ENCODE measurements at regions of chr7 and their contacts with region 1.

Region 1: DNA sequence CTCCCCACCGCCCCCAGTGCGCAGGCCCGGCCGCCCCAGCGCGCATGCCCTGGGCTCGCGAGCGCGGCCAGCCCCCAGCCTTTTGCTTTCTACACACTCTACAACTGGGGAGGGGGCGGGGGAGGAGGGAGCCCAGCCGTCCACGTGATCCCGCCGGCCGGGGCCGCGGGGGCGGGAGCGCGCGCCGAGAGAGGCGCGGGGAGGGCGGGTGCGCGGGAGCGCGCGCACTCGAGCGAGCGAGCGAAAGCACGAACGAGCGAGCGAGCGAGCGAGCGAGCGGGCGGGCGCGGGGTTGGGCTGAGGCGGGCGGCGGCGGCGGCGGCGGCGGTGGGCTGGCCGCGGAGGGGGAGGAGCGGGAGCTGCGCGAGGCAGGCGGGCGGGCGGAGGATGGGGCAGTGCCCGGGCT is at the start of gene AUTS2:
- DNase-seq: peak; percentile 86 to 91 (median 90)
- ATAC-seq: peak; percentile 85 to 93 (median 90)
- H3K4me3 ChIP-seq: peak within 1 kb of the TSS; percentile 65 to 98 (median 85)
- H3K27ac ChIP-seq: peak within 1 kb of the TSS; percentile 72 to 95 (median 87)
- H3K4me1 ChIP-seq: peaks cover 0 to 34% (median 4%) of the 10 kb centered on the region in 12 donors
- H3K27me3 ChIP-seq: no peaks in the 10 kb centered on the region
- CTCF ChIP-seq: no peak
- POLR2A ChIP-seq: no peak
- total RNA-seq, gene AUTS2: 5.4 to 14.0 (median 8.3) TPM

Region 2: GRCh38 chr7:69412331-69413078 is 185.6 kb before region 1 on chr7:
- intact Hi-C with region 1: loop called in 1 of 10 experiments (anchors 10 kb)
- DNase-seq: peak in 4 of 5 donors; percentile 40 to 74 (median 50)
- ATAC-seq: peak; percentile 85 to 99 (median 96)
- H3K4me3 ChIP-seq: no peak overlapping the region
- H3K27ac ChIP-seq: no peak overlapping the region
- H3K4me1 ChIP-seq: peaks cover 0 to 9% (median 0%) of the 10 kb centered on the region in 12 donors
- H3K27me3 ChIP-seq: no peaks in the 10 kb centered on the region
- CTCF ChIP-seq: no peak
- POLR2A ChIP-seq: no peak

Region 3: DNA sequence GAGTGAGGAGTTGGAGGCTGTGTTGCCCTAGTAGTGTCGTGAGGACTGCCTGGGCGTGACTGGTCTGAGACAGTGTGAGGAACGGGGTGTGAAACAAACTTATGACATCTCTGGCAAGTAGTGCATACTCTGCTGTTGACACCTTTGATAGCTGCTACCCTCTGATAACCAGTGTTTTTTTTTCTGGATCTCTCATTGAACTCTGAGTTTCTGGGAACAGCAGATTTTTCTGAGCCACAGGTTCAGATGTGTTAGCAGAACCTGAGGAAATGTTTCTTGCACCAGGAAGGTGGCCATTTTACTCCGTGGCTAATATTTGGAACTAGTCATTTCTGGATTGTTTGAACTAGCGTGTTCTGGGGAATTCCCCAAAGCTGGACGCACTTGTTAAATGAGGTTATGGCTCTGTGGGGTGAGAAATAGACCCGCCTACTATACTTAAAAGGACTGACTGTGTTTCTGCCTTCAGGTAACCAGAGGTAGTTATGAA is 53.1 kb after region 1 on chr7:
- intact Hi-C with region 1: loop called in 2 of 10 experiments (anchors 5 kb)
- DNase-seq: no peak
- ATAC-seq: peak in 1 of 4 donors; percentile 46
- H3K4me3 ChIP-seq: no peak overlapping the region
- H3K27ac ChIP-seq: no peak overlapping the region
- H3K4me1 ChIP-seq: peaks cover 0 to 24% (median 16%) of the 10 kb centered on the region in 12 donors
- H3K27me3 ChIP-seq: no peaks in the 10 kb centered on the region
- CTCF ChIP-seq: no peak
- POLR2A ChIP-seq: no peak

Region 4: DNA sequence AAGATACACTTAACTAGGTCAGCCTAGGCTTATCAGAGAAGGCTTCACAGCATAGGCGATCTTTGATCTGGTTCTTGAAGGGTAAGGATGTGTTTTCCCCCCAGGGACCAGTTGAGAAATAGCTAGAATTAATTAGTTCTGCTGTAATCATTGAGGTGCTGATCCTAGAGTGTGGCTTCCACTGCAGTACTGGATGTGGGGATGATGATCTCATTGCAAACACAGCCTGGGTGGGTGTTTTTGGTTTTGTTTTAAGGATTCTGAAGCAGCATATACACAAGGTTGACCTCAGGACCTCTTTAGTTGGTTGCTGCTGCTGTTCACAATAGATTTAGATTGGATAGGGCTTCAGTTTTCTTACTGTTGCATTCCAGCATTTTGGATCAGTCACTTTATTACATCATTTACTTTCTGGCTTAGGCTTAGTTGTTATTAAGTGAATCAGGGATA is 159.9 kb after region 1 on chr7:
- intact Hi-C with region 1: loop called in 1 of 10 experiments (anchors 10 kb)
- DNase-seq: no peak
- ATAC-seq: peak in 1 of 4 donors; percentile 28
- H3K4me3 ChIP-seq: no peak overlapping the region
- H3K27ac ChIP-seq: no peak overlapping the region
- H3K4me1 ChIP-seq: peaks cover 0 to 23% (median 0%) of the 10 kb centered on the region in 12 donors
- H3K27me3 ChIP-seq: no peaks in the 10 kb centered on the region
- CTCF ChIP-seq: no peak
- POLR2A ChIP-seq: no peak

Region 5: GRCh38 chr7:69893906-69894305 is 295.8 kb after region 1 on chr7:
- intact Hi-C with region 1: loop called in 1 of 10 experiments (anchors 10 kb)
- DNase-seq: no peak
- ATAC-seq: peak in 2 of 4 donors; percentile 50 to 52
- H3K4me3 ChIP-seq: no peak overlapping the region
- H3K27ac ChIP-seq: no peak overlapping the region
- H3K4me1 ChIP-seq: no peaks in the 10 kb centered on the region
- H3K27me3 ChIP-seq: no peaks in the 10 kb centered on the region
- CTCF ChIP-seq: peak in 10 of 12 donors; percentile 21 to 59 (median 42)
- POLR2A ChIP-seq: no peak

Measured in heart left ventricle (tissue), 16 donors.